CD4-positive, alpha-beta memory T cell (primary cell): ENCODE measurements at regions of chr3 and their contacts with region 1.

Region 1: GRCh38 chr3:101827211-101828174 is 21.8 kb upstream of the NFKBIZ start:
- DNase-seq: peak; percentile 76 to 92 (median 80)
- H3K4me3 ChIP-seq: peak overlapping the region; percentile 63 to 89
- H3K4me3 Mint-ChIP-seq: peak overlapping the region; percentile 89 to 98 (median 94)
- H3K27ac ChIP-seq: peak overlapping the region; percentile 92
- H3K27ac Mint-ChIP-seq: peak overlapping the region; percentile 96 to 100 (median 98)
- H3K4me1 ChIP-seq: peaks cover 40% of the 10 kb centered on the region
- H3K4me1 Mint-ChIP-seq: peaks cover 35 to 59% (median 44%) of the 10 kb centered on the region in 4 donors
- H3K27me3 ChIP-seq: no peaks in the 10 kb centered on the region
- H3K27me3 Mint-ChIP-seq: no peaks in the 10 kb centered on the region

Region 2: GRCh38 chr3:101809178-101810021 is 18.1 kb before region 1 on chr3:
- CTCF ChIA-PET with region 1: interaction called, 20 read pairs
- POLR2A ChIA-PET with region 1: interaction called, 10 read pairs
- intact Hi-C with region 1: no loop called
- DNase-seq: peak; percentile 49 to 60 (median 55)
- H3K4me3 ChIP-seq: no peak overlapping the region
- H3K4me3 Mint-ChIP-seq: peak overlapping the region in 6 of 8 donors; percentile 22 to 43 (median 34)
- H3K27ac ChIP-seq: peak overlapping the region; percentile 29
- H3K27ac Mint-ChIP-seq: peak overlapping the region; percentile 43 to 90 (median 83)
- H3K4me1 ChIP-seq: peaks cover 28% of the 10 kb centered on the region
- H3K4me1 Mint-ChIP-seq: peaks cover 25 to 47% (median 30%) of the 10 kb centered on the region in 4 donors
- H3K27me3 ChIP-seq: no peaks in the 10 kb centered on the region
- H3K27me3 Mint-ChIP-seq: no peaks in the 10 kb centered on the region

Region 3: DNA sequence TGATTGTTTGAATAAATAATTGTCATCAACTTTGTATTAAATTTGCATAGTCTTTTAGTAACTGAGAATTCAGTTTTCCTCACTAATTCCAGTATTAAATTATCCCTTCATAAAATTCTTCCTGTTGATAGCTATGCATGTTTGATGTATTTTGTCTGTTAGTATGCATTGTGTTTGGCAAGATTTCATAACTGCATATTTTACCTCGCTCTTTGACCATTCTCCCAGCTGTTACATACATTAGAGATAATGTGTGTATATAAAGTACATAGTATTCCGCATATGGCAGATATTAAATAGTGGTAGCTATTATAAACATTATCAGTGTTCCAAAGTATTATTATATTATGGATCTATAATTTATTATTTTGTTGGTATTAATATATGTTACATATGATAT is 11.2 kb after region 1 on chr3:
- CTCF ChIA-PET with region 1: interaction called, 3 read pairs
- POLR2A ChIA-PET with region 1: interaction called, 11 read pairs
- intact Hi-C with region 1: no loop called
- DNase-seq: no peak
- H3K4me3 ChIP-seq: no peak overlapping the region
- H3K4me3 Mint-ChIP-seq: no peak overlapping the region
- H3K27ac ChIP-seq: no peak overlapping the region
- H3K27ac Mint-ChIP-seq: peak overlapping the region in 1 of 7 donors; percentile 2
- H3K4me1 ChIP-seq: peaks cover 5% of the 10 kb centered on the region
- H3K4me1 Mint-ChIP-seq: peaks cover 11 to 22% (median 12%) of the 10 kb centered on the region in 4 donors
- H3K27me3 ChIP-seq: no peaks in the 10 kb centered on the region
- H3K27me3 Mint-ChIP-seq: no peaks in the 10 kb centered on the region

Region 4: DNA sequence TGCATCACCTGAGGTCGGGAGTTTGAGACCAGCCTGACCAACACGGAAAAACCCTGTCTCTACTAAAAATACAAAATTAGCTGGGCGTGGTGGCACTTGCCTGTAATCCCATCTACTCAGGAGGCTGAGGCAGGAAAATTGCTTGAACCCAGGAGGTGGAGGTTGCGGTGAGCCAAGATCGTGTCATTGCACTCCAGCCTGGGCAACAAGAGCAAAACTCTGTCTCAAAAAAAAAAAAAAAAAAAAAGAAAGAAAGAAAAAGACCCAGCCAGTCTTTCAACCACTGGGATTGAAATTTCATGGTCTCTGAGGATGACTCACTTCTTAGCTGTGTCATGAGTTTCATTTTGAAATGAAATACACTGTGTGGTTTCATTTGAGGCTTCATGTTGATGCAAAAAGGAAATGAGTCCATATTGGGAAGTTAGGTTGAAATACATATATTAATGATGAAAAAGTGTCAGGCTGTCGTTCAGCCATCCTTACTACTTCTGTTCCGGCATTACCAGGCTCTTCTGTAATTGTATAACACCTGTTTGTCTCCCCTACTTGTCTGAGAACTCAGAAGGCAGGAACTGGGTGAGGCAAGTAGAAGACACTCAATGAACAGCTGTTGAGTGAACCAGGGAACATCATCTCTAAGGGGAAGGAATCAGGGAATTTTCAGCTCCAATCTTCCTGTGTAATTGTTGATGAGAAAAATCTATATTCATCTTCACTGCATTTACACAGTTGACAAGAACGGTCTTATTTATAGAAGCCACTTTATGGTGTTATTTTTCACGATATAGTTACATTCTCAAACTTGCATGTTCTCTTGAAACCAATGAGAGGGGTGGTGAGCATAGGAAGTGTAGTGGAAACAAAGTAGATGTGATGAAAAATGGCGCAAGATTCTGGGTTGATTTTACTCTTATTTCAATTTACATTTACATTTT is 109.2 kb after region 1 on chr3:
- CTCF ChIA-PET with region 1: no interaction called
- POLR2A ChIA-PET with region 1: interaction called, 25 read pairs
- intact Hi-C with region 1: loop called (anchors 5 kb)
- DNase-seq: peak; percentile 52 to 71 (median 65)
- H3K4me3 ChIP-seq: no peak overlapping the region
- H3K4me3 Mint-ChIP-seq: peak overlapping the region; percentile 61 to 87 (median 71)
- H3K27ac ChIP-seq: no peak overlapping the region
- H3K27ac Mint-ChIP-seq: peak overlapping the region; percentile 75 to 92 (median 86)
- H3K4me1 ChIP-seq: peaks cover 63% of the 10 kb centered on the region
- H3K4me1 Mint-ChIP-seq: peaks cover 18 to 26% (median 22%) of the 10 kb centered on the region in 4 donors
- H3K27me3 ChIP-seq: no peaks in the 10 kb centered on the region
- H3K27me3 Mint-ChIP-seq: no peaks in the 10 kb centered on the region